G401 (cell line): ENCODE measurements at regions of chr6 and their contacts with region 1.

Region 1: DNA sequence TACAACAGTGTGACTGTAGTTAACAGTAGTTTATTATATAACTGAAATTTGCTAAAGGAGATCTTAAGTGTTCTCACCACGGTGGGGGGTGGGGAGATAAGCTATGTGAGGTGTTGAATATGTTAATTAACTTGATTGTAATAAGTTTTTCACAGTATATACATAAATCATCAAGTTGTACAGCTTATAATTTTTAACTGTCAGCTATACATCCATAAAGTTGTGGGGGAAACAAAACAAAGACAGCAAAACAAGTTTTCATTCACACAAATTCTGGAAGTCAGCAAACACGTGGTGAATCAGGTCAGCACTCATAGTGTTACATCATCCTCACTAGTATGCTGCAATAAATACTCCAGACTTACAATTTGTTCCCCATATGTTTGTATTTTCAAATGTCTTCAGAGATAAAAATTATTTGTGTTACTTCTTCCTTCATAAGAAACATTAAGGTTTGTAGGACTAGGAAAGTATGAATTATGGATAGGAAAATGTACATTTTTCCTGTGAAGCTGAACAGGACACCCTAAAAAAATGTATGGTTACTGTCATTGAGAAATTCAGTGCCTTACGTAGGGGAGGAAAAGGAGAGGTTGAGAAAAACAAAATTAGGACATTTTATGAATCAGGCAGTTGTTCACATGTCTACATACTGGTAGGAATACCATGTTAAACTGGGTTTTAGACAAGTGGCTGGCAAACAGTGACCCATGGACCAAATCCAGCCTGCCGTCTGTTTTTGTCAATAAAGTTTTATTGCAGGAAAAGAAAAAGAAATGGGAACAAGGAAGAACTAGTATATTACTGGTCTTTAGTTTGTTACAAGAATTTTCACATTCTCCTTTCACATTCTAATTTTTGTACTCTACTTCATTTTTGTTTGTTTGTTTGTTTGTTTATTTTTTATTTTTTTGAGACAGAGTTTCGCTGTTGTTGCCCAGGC is 6.0 kb downstream of the SUMO4 start:
- DNase-seq: no peak

Region 2: GRCh38 chr6:149060300-149060997 is 345.6 kb before region 1 on chr6:
- in situ Hi-C with region 1: loop called (anchors 25 kb)
- DNase-seq: no peak

Region 3: GRCh38 chr6:149586149-149586548 is 180.1 kb after region 1 on chr6:
- in situ Hi-C with region 1: no loop called
- DNase-seq: no peak